Left cardiac atrium (tissue), 4 donors: ENCODE measurements at regions of chr2 and their contacts with region 1.

Region 1: GRCh38 chr2:137910641-137911040 is 53.6 kb upstream of the HNMT start:
- DNase-seq: no peak
- ATAC-seq: no peak

Region 2: GRCh38 chr2:137802038-137802437 is 108.6 kb before region 1 on chr2:
- intact Hi-C with region 1: no loop called
- DNase-seq: no peak
- ATAC-seq: peak in 1 of 2 donors; percentile 57

Region 3: DNA sequence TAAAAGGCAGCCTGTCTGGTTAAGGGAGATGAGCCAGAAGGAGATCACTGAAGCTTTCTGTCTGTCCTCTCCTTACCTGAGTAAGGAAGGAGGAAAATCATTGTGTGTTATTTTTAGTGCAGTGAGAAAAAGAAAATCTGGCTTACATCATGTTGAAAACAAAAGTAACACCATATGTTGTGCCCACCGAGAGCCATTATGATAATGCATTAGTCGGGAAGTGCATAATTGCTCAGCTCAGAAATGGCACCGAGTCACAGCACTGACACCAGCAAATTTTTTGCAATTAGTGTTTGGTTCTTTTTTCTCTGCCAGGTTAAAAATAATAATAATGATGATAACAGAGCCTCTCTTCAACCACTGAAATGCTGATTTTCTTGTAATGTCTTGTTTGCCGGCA is 100.2 kb after region 1 on chr2:
- intact Hi-C with region 1: no loop called
- DNase-seq: no peak
- ATAC-seq: no peak

Region 4: GRCh38 chr2:138779781-138780445 is 869.3 kb after region 1 on chr2 and contains the start of gene NXPH2:
- intact Hi-C with region 1: loop called (anchors 5 kb)
- DNase-seq: no peak
- ATAC-seq: peak; percentile 61 to 66
- total RNA-seq, gene NXPH2: not detected

Region 5: GRCh38 chr2:138787053-138787666 is 876.5 kb after region 1 on chr2:
- intact Hi-C with region 1: loop called (anchors 5 kb)
- DNase-seq: no peak
- ATAC-seq: no peak

Region 6: GRCh38 chr2:138827426-138828054 is 916.9 kb after region 1 on chr2:
- intact Hi-C with region 1: loop called (anchors 1 to 5 kb)
- DNase-seq: no peak
- ATAC-seq: peak; percentile 59 to 75